ENCODE measurements at regions of chr22 and their contacts with region 1.

Region 1: GRCh38 chr22:46335201-46336118 is at the start of gene TRMU:
- H3K4me3 ChIP-seq: peak within 1 kb of the TSS; percentile 96
- H3K27ac ChIP-seq: peak within 1 kb of the TSS; percentile 92
- H3K4me1 ChIP-seq: peaks cover 5% of the 10 kb centered on the region
- CTCF ChIP-seq: peak; percentile 37; the same call in 1 of the 2 replicates

Region 2: DNA sequence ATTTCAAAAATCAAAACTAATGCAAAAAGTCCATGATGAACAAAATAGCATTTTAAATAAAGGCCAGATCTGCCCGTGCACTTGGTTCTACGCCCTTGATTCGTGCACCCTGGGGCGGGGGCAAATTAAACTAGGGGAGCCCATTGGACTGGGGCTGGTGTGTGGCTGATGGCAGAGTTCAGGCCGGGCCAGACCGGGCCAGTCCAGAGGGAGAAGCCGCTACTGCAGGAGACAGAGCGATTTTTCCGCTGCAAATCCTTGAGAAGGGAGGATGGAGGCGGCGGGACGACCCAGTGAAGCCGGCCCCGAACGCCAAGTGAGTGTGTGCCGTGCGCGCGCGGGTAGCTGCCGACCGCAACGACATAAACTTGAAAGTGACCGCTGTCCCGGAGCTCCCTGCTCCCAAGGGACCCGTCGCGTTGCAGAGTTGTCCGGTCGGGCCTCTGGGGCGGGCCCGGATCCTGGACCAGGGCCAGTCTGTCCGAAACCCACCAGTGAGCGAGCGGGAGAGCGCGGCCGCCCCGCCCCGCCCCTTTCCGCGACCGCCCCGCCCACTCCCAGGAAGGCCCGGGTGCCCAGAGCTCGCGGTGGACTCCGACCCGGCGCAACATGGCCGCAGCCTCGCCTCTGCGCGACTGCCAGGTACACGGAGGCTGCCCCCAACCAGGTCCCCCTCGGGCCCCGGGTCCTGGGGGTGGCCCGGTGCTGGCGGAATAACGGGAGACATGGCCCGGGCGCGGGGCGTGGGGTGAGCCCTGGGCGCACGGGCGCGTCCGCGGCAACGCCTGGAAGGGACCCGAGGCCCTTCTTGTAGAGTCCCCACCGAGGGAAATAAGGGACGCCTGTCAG is 67.8 kb before region 1 on chr22 and contains the start of gene TTC38:
- CTCF ChIA-PET with region 1: no interaction called
- POLR2A ChIA-PET with region 1: interaction called, 10 read pairs
- H3K4me3 ChIP-seq: peak within 1 kb of the TSS; percentile 86
- H3K27ac ChIP-seq: peak within 1 kb of the TSS; percentile 54
- H3K4me1 ChIP-seq: no peaks in the 10 kb centered on the region
- CTCF ChIP-seq: no peak

Region 3: DNA sequence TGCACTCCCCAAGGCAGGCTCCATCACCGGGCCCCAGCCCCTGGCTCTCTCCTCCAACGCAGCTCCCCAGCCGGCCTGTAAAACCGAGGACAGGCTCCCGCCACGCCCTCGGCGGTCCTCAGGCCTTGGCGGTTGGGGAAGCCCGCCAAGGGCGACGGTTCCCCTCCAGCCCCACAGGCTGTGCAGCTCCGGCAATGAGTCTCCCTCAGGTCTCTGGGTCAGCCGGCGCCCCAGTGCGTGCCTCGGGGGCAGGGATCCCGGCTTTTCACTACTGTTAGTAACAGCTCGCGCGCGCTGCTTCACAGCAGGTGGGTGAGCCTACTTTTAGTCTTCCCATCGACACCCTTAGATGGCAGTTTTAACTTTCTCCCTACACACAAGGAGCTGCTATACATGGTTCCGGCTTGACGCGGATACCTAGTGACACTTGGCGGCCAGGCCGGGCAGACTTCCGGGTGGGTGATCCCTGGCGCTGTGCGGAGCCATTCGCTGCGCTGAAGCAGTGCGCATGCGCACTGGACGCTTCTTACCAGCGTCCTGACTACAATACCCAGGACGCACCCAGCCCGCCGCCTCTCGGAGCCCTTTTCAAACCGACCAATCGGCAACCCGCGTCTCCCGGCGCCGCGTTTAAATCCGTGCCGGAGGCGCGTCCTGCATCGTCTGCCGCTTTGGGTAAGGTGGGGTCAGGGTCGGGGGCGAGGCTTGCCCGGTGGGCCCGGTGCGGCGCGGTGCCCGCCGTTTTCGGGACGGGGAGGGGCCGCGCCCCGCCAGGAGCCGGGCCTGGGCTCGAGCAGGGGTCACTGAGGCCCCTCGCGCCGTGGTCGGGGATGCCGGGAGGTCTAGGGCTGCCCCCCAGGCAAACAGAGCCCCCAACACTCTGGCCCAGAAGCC is 39.0 kb before region 1 on chr22 and contains the start of gene GTSE1:
- CTCF ChIA-PET with region 1: no interaction called
- POLR2A ChIA-PET with region 1: interaction called, 17 read pairs
- H3K4me3 ChIP-seq: peak within 1 kb of the TSS; percentile 94
- H3K27ac ChIP-seq: peak within 1 kb of the TSS; percentile 81
- H3K4me1 ChIP-seq: peaks cover 8% of the 10 kb centered on the region
- CTCF ChIP-seq: peak; percentile 86

Measured in HEK293 (cell line).